ENCODE measurements at regions of chr1 and their contacts with region 1.

Region 1: DNA sequence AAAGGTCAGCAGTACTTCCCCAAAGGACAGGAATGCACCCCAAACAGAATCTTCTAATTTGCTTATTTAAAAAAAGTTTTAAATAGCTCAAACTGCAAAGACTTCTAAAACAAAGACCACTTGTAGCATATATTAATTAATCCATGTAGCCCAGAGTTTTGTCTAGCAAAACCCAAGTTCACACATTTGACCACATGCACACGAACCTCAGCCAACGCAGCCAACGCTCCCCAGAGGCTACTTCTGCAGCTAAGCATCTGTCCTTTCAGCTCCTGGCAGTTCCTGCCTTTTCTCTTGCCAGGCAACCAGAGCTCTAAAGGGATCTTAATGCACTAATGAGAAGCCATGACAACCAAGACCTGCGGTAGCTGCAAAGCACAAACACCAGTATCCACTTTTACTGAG is 89.6 kb downstream of the RERE start:
- DNase-seq: no peak
- H3K4me3 ChIP-seq: no peak overlapping the region
- H3K27ac ChIP-seq: no peak overlapping the region
- H3K4me1 ChIP-seq: no peaks in the 10 kb centered on the region
- H3K27me3 ChIP-seq: no peaks in the 10 kb centered on the region
- CTCF ChIP-seq: no peak

Region 2: GRCh38 chr1:7975212-7975865 is 752.5 kb before region 1 on chr1:
- CTCF ChIA-PET with region 1: interaction called, 13 read pairs
- POLR2A ChIA-PET with region 1: no interaction called
- intact Hi-C with region 1: loop called (anchors 5 kb)
- DNase-seq: peak; percentile 56 to 84
- H3K4me3 ChIP-seq: no peak overlapping the region
- H3K27ac ChIP-seq: no peak overlapping the region
- H3K4me1 ChIP-seq: no peaks in the 10 kb centered on the region; the same call in 1 of the 2 replicates
- H3K27me3 ChIP-seq: no peaks in the 10 kb centered on the region
- CTCF ChIP-seq: peak; percentile 84

Region 3: GRCh38 chr1:8374812-8375211 is 353.0 kb before region 1 on chr1:
- CTCF ChIA-PET with region 1: interaction called, 4 read pairs
- POLR2A ChIA-PET with region 1: no interaction called
- intact Hi-C with region 1: loop called (anchors 10 kb)
- DNase-seq: no peak
- H3K4me3 ChIP-seq: no peak overlapping the region
- H3K27ac ChIP-seq: no peak overlapping the region
- H3K4me1 ChIP-seq: no peaks in the 10 kb centered on the region
- H3K27me3 ChIP-seq: no peaks in the 10 kb centered on the region
- CTCF ChIP-seq: peak; percentile 55

Region 4: GRCh38 chr1:8560611-8561544 is 166.9 kb before region 1 on chr1:
- CTCF ChIA-PET with region 1: interaction called, 16 read pairs
- POLR2A ChIA-PET with region 1: no interaction called
- intact Hi-C with region 1: loop called (anchors 1 kb)
- DNase-seq: peak; percentile 5 to 43
- H3K4me3 ChIP-seq: no peak overlapping the region
- H3K27ac ChIP-seq: no peak overlapping the region
- H3K4me1 ChIP-seq: peaks cover 13% of the 10 kb centered on the region
- H3K27me3 ChIP-seq: no peaks in the 10 kb centered on the region
- CTCF ChIP-seq: peak; percentile 86

Region 5: DNA sequence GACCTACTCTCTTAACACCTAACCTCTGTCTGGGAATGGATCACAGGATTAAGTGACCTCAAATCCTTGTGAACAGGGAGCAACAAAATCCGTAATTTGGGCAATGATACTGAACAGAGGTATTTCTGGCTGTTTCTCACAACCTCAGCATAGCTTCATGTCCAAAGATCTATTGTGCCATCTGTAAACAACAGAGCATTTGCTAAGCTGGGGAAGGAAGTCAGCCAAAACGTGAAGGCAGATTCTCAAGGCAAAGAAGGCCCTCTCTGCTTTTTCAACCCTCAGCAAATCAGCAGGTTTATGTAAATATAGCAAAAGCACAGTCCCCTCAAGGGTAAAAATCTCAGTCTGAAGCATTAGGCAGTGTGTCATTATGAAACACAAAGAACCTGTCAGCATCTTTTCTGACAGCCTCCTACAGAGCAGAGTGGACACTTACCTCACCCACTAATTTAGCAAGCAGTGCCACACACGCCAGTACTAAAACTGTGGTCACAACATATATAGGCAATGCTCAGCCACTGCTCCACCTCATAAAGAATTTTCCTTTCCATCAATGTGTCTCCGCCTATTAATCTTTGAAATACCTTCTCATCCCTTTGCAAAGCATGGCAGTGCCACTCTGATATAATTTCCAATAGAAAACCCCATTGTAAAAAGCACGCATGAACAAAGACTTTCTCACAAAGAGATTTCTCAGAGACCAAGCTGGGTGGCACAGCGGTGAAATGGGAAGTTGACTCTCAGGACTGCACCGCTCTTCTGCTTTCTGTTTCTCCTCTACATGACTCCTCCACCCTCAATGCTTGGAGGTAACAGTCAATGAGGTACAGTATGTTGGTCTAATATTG is 98.3 kb before region 1 on chr1:
- CTCF ChIA-PET with region 1: no interaction called
- POLR2A ChIA-PET with region 1: no interaction called
- intact Hi-C with region 1: loop called (anchors 10 kb)
- DNase-seq: no peak
- H3K4me3 ChIP-seq: no peak overlapping the region
- H3K27ac ChIP-seq: no peak overlapping the region
- H3K4me1 ChIP-seq: peaks cover 24% of the 10 kb centered on the region
- H3K27me3 ChIP-seq: no peaks in the 10 kb centered on the region
- CTCF ChIP-seq: no peak

Region 6: GRCh38 chr1:8848663-8849386 is 121.0 kb after region 1 on chr1:
- CTCF ChIA-PET with region 1: interaction called, 7 read pairs
- POLR2A ChIA-PET with region 1: interaction called, 4 read pairs
- intact Hi-C with region 1: loop called (anchors 2 kb)
- DNase-seq: peak; percentile 57 to 86
- H3K4me3 ChIP-seq: no peak overlapping the region
- H3K27ac ChIP-seq: no peak overlapping the region
- H3K4me1 ChIP-seq: no peaks in the 10 kb centered on the region
- H3K27me3 ChIP-seq: no peaks in the 10 kb centered on the region
- CTCF ChIP-seq: peak; percentile 76

Measured in PC-9 (cell line).